ENCODE measurements at regions of chr3 and their contacts with region 1.

Region 1: DNA sequence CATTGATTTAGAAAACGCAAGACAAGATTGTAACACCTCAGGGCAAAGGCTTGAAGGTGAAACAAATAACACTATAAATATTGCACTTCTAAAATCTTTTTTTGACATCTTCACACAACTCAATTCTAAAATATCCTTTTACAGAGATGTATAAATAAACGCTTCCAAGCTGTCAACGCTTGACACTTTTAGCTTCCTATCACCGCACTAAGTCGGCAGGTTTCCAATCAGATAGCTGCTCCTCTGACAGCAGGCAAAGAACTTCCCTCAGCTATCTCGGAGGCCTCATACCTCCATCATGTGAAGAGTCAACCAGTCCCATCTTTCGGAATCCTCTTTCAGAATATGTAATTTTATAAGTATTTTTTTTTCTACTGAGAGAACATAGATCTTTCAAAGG is 71.0 kb downstream of the PCOLCE2 start:
- DNase-seq: no peak
- H3K4me3 ChIP-seq: no peak overlapping the region
- H3K27ac ChIP-seq: no peak overlapping the region
- H3K4me1 ChIP-seq: no peaks in the 10 kb centered on the region
- H3K27me3 ChIP-seq: no peaks in the 10 kb centered on the region

Region 2: DNA sequence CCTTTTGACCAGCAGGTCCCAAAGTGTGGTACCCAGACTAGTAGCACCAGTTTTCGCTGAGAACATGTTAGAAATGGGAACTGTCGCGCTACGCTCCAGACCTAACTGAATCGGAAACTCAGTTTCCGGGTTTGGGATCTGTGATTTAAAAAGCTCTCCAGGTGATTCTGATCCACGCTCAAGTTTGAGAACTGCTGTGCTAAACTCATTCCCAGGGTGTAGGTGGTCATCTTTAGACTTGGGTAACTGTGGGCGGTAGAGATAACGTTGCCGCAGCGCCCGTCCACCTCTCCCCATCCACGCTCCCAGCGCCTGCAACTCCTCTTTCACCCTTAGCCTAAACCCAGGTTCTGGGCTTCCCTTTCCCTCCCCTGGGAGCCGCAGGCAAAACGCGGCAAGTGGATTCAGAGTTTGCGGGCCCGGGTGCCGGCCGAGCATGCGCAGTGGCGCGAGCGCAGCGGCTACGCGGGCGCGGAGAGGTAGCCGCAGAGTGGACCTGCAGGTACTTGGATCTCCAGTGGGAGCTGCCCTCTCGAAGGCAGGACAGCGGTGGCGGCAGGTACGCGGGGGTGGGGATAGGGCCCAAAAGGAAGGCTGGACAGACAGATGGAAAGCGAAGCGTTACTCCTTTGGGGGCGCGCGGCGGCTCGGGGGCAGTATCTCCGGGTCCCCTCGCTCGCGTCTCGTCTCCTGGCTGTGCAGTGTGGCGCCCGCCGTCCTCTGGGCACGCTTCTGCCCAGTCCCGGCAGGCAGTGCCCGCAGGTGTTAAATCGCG is 221.8 kb before region 1 on chr3 and contains the start of gene PLS1:
- in situ Hi-C with region 1: loop called (anchors 10 kb)
- DNase-seq: peak; percentile 82
- H3K4me3 ChIP-seq: peak within 1 kb of the TSS; percentile 81
- H3K27ac ChIP-seq: no peak within 1 kb of the TSS
- H3K4me1 ChIP-seq: no peaks in the 10 kb centered on the region
- H3K27me3 ChIP-seq: no peaks in the 10 kb centered on the region
- total RNA-seq, gene PLS1: 0.13 and 0.54 TPM in 2 replicates

Region 3: GRCh38 chr3:143421556-143421955 is 603.7 kb after region 1 on chr3:
- in situ Hi-C with region 1: no loop called
- DNase-seq: peak; percentile 26
- H3K4me3 ChIP-seq: no peak overlapping the region
- H3K27ac ChIP-seq: no peak overlapping the region
- H3K4me1 ChIP-seq: peaks cover 4% of the 10 kb centered on the region
- H3K27me3 ChIP-seq: no peaks in the 10 kb centered on the region